ENCODE measurements at regions of chr2 and their contacts with region 1.

Region 1: GRCh38 chr2:201451292-201452057 is at the starts of genes STRADB and TRAK2:
- DNase-seq: peak; percentile 98
- ATAC-seq: peak; percentile 88
- H3K4me3 Mint-ChIP-seq: peak within 1 kb of the TSS; percentile 98
- H3K27ac Mint-ChIP-seq: peak within 1 kb of the TSS; percentile 98
- H3K4me1 Mint-ChIP-seq: peaks cover 62% of the 10 kb centered on the region
- H3K27me3 Mint-ChIP-seq: no peaks in the 10 kb centered on the region
- total RNA-seq, gene STRADB: 26.8 to 30.3 TPM
- total RNA-seq, gene TRAK2: 51.3 to 53.0 TPM

Region 2: DNA sequence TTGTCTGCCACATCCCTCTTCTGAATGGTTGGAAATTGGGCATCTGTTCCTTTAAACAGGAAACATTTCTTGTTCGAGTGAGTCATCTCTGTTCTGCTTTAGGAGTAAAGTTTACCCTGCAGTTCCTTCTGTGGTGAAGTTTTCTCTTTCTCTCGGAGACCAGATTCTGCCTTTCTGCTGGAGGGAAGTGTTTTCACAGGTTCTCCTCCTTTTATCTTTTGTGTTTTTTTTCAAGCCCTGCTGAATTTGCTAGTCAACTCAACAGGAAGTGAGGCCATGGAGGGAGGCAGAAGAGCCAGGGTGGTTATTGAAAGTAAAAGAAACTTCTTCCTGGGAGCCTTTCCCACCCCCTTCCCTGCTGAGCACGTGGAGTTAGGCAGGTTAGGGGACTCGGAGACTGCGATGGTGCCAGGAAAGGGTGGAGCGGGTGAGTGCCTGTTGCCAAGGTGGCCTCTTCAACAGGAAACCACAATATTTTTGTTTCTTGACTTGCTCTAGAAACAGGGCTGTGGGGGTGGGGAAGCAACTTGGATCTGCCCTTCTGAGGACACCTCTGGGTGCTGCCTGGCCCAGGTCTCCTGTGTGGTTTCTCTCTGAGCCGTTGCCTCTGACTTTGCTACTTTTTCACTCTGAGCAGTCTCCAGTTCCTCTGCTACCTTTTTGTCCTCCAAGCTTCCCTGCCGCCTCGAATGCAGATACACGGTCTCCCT is 193.4 kb before region 1 on chr2:
- CTCF ChIA-PET with region 1: interaction called, 3 read pairs
- POLR2A ChIA-PET with region 1: interaction called, 20 read pairs
- DNase-seq: peak; percentile 98
- ATAC-seq: peak; percentile 71
- H3K4me3 Mint-ChIP-seq: peak overlapping the region; percentile 81
- H3K27ac Mint-ChIP-seq: peak overlapping the region; percentile 94
- H3K4me1 Mint-ChIP-seq: peaks cover 74% of the 10 kb centered on the region
- H3K27me3 Mint-ChIP-seq: no peaks in the 10 kb centered on the region

Region 3: DNA sequence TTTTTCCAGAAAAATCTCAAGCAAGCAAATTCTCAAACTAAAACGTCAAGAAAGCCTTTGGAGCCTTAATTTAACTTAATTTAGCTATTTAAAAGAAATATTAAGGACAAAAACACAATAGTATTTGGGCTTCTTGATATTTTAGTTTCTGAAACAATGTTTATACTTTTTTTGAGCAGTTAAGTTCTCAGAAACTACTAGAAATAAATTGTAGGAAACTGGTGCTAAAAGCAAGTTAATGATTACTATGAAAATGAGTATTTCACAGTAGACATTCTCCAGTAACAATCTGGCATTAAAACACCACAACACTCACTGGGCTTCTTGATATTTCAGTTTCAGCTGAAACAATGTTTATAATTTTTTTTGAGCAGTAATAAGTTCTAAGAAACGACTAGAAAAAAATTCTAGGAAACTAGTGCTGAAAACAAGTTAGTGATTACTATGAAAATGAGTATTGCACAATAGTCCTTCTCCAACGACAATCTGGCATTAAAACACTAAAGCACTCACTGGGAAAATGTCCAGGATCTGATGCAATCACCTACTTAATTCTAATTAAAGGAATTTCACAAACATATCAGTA is 45.3 kb before region 1 on chr2:
- CTCF ChIA-PET with region 1: interaction called, 15 read pairs
- POLR2A ChIA-PET with region 1: interaction called, 11 read pairs
- DNase-seq: no peak
- ATAC-seq: peak; percentile 44
- H3K4me3 Mint-ChIP-seq: peak overlapping the region; percentile 10
- H3K27ac Mint-ChIP-seq: peak overlapping the region; percentile 27
- H3K4me1 Mint-ChIP-seq: peaks cover 53% of the 10 kb centered on the region
- H3K27me3 Mint-ChIP-seq: no peaks in the 10 kb centered on the region

Region 4: DNA sequence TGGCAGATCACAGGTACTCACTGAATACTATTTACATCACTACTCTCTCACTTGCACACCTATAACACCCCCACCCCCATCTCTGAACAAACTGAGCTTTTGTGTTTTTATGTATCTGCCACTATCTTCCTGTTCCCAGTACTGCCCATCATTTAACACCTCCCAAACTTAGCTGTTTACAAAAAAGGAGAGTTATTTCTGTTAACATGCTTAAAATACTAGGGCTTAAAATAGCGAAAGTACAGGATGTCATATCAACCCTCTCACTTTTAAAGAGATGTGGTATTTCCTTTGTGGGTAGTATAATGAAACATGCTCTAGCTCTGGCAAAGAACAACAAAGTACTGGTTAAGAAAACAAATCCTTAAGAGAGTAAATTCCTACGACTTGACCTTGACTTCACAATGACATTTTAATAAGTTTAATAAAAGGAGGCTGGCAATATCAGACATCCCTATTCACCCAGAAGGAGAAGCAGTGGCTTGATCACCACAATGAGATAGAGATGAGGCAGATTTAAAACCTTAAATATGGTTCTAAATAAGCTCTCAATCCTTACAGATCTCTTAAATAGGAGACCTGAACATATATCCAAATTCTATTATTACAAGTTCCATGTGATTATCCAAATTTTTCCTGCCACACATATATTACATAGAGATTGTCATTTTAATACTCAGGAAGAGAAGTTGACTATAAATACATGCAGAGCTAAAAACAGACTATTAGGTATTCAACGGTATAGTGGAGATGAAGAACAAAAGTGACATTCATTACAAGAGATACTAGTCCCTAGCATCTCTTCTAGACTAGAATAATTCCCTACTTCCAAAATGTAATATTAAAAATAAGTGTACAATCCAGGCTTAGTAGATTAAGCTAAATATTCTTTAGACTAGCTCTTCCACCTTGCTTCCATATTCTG is 37.1 kb before region 1 on chr2:
- CTCF ChIA-PET with region 1: interaction called, 7 read pairs
- POLR2A ChIA-PET with region 1: interaction called, 17 read pairs
- DNase-seq: no peak
- ATAC-seq: peak; percentile 85
- H3K4me3 Mint-ChIP-seq: no peak overlapping the region
- H3K27ac Mint-ChIP-seq: no peak overlapping the region
- H3K4me1 Mint-ChIP-seq: peaks cover 12% of the 10 kb centered on the region
- H3K27me3 Mint-ChIP-seq: no peaks in the 10 kb centered on the region

Region 5: DNA sequence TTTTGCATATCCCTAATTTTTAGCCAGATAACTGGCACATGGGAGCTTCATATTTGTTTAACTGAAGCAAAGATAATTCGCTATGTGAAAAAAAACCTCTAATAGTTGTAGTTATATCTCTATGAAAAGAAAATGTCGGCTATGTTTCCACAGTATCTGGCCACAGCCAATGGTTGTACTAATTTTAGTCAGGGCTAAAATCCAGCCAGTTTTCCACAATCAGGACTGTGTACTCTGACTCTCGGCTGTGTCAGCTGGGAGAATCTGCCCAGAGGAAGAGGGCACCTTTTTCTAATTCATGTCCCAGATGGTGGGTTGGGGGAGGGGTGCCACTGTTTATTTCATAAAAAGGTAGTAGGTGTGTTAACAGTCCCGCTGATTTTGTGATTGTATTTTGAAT is 38.8 kb after region 1 on chr2:
- CTCF ChIA-PET with region 1: no interaction called
- POLR2A ChIA-PET with region 1: no interaction called
- DNase-seq: no peak
- ATAC-seq: no peak
- H3K4me3 Mint-ChIP-seq: no peak overlapping the region
- H3K27ac Mint-ChIP-seq: no peak overlapping the region
- H3K4me1 Mint-ChIP-seq: no peaks in the 10 kb centered on the region
- H3K27me3 Mint-ChIP-seq: peaks cover 8% of the 10 kb centered on the region

Region 6: DNA sequence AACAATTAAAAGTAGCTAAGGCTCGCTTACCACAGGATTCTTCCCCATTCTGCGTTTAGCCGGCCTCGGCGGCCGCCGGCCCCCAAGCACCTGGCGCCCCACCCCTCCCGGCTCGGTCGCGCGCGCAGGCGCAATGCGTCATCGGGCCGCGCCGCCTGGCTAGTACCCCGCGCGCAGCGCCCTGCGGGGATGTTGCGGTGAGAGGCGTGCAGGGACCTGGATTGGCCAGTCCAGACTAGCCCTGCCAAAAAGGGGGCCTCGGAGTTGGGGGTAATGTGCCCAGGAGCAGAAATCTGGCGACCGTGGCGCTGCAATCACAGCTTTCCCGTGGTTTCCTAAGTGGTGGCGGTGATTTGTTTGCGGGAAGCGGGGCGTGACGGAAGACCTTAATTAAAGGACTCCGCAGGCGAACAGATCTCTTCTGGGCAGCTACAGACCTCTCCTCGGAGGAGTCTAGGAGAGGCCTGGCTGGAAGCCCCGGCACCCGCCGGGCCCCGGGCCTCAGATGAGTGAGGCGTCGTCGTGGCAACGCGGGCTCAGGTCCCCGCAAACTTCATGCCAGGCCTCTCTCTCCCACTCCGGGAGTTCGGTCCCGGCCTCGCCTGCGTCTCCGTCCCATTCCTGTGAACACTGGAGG is 191.2 kb after region 1 on chr2:
- CTCF ChIA-PET with region 1: no interaction called
- POLR2A ChIA-PET with region 1: interaction called, 12 read pairs
- DNase-seq: peak; percentile 89
- ATAC-seq: peak; percentile 94
- H3K4me3 Mint-ChIP-seq: peak overlapping the region; percentile 86
- H3K27ac Mint-ChIP-seq: peak overlapping the region; percentile 95
- H3K4me1 Mint-ChIP-seq: peaks cover 23% of the 10 kb centered on the region
- H3K27me3 Mint-ChIP-seq: no peaks in the 10 kb centered on the region